Activated CD4-positive, alpha-beta T cell treated with anti-CD3 and anti-CD28 coated beads, Interleukin-2, amount 10 ng/mL, durations not matched to agents 24 days and 14 days (primary cell): ENCODE measurements at regions of chr14 and their contacts with region 1.

Region 1: GRCh38 chr14:75293920-75294642 is 15.5 kb downstream of the FOS start:
- DNase-seq: peak; percentile 98
- H3K4me3 Mint-ChIP-seq: peak overlapping the region; percentile 88
- H3K27ac Mint-ChIP-seq: peak overlapping the region; percentile 95
- H3K4me1 Mint-ChIP-seq: peaks cover 18% of the 10 kb centered on the region
- H3K27me3 Mint-ChIP-seq: peaks cover 20% of the 10 kb centered on the region

Region 2: GRCh38 chr14:75002392-75003249 is 291.5 kb before region 1 on chr14 and contains the start of gene EIF2B2:
- intact Hi-C with region 1: loop called (anchors 1 kb)
- DNase-seq: peak; percentile 100
- H3K4me3 Mint-ChIP-seq: peak within 1 kb of the TSS; percentile 99
- H3K27ac Mint-ChIP-seq: peak within 1 kb of the TSS; percentile 94
- H3K4me1 Mint-ChIP-seq: peaks cover 35% of the 10 kb centered on the region
- H3K27me3 Mint-ChIP-seq: peaks cover 8% of the 10 kb centered on the region
- total RNA-seq, gene EIF2B2: 51.6 and 53.3 TPM in 2 replicates

Region 3: GRCh38 chr14:75132382-75133086 is 161.5 kb before region 1 on chr14:
- intact Hi-C with region 1: loop called (anchors 1 kb)
- DNase-seq: peak; percentile 91
- H3K4me3 Mint-ChIP-seq: no peak overlapping the region
- H3K27ac Mint-ChIP-seq: no peak overlapping the region
- H3K4me1 Mint-ChIP-seq: peaks cover 13% of the 10 kb centered on the region
- H3K27me3 Mint-ChIP-seq: no peaks in the 10 kb centered on the region

Region 4: DNA sequence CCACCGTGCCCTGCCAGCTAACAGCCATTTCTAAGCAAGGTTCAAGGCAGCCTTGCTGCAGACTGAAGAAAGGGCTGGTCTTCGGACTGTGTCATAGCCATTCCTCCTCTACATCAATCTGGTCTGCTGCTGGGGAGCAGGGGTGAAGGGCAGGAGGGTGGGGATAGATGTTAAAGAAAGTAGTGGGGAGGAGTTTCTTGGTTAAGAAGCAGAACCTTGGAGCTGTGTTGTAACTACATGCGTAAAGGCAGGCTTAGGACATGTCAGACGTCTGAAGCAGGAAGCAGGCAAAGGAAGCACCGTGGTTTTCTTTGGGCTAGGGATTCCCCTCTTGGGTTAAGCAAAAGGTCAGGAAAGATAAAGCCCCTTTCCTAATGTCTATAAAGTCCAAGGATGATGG is 149.1 kb before region 1 on chr14:
- intact Hi-C with region 1: no loop called
- DNase-seq: peak; percentile 72
- H3K4me3 Mint-ChIP-seq: peak overlapping the region; percentile 29
- H3K27ac Mint-ChIP-seq: peak overlapping the region; percentile 8
- H3K4me1 Mint-ChIP-seq: peaks cover 38% of the 10 kb centered on the region
- H3K27me3 Mint-ChIP-seq: no peaks in the 10 kb centered on the region

Region 5: DNA sequence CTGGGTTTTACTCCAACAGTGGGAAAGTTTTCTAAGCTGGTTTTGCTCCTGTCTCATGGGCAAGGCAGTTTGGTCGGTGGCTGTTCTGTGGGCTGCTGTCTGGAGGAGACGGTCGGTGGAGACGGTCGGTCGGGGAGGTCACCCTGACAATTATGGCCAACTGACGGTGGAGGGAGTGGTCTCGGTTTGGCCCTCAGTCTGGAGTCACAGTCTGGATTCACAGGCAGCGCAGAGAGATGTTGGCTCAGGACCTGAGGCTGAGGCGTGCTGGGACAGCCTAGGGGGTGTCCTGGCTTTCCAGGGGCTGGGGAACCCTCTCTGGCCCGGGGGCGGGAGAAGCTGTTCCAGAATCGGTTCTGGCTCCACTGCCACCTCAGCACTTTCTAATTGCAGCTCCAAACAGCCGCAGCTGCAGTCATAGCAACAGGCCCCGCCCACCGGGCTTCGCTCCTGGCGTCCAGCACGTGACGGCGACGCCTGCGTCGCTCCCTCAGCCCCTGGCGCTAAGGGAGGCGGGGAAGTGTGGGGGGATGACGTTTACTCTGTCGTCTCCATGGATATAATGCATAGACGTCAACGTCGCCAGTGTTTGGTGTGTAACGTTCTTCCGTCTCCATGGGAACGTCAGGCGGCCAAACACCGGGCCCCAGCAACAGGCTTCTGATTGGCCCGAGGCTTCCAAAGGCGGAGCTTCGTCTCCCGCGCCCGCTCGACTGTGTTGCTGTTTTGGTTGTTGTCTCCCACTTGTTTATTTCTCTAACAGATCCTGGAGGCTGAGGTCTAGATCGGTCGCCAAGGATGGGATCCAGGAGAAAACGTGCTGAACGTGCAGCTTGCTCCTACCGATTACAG is 35.2 kb before region 1 on chr14:
- intact Hi-C with region 1: loop called (anchors 1 kb)
- DNase-seq: peak; percentile 100
- H3K4me3 Mint-ChIP-seq: peak overlapping the region; percentile 85
- H3K27ac Mint-ChIP-seq: peak overlapping the region; percentile 99
- H3K4me1 Mint-ChIP-seq: peaks cover 17% of the 10 kb centered on the region
- H3K27me3 Mint-ChIP-seq: peaks cover 54% of the 10 kb centered on the region

Region 6: DNA sequence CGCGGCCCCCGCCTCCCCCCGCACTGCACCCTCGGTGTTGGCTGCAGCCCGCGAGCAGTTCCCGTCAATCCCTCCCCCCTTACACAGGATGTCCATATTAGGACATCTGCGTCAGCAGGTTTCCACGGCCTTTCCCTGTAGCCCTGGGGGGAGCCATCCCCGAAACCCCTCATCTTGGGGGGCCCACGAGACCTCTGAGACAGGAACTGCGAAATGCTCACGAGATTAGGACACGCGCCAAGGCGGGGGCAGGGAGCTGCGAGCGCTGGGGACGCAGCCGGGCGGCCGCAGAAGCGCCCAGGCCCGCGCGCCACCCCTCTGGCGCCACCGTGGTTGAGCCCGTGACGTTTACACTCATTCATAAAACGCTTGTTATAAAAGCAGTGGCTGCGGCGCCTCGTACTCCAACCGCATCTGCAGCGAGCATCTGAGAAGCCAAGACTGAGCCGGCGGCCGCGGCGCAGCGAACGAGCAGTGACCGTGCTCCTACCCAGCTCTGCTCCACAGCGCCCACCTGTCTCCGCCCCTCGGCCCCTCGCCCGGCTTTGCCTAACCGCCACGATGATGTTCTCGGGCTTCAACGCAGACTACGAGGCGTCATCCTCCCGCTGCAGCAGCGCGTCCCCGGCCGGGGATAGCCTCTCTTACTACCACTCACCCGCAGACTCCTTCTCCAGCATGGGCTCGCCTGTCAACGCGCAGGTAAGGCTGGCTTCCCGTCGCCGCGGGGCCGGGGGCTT is 15.5 kb before region 1 on chr14 and contains the start of gene FOS:
- intact Hi-C with region 1: loop called (anchors 1 kb)
- DNase-seq: peak; percentile 97
- H3K4me3 Mint-ChIP-seq: peak within 1 kb of the TSS; percentile 88
- H3K27ac Mint-ChIP-seq: peak within 1 kb of the TSS; percentile 98
- H3K4me1 Mint-ChIP-seq: peaks cover 40% of the 10 kb centered on the region
- H3K27me3 Mint-ChIP-seq: peaks cover 53% of the 10 kb centered on the region
- total RNA-seq, gene FOS: 26.5 and 29.6 TPM in 2 replicates

Region 7: GRCh38 chr14:75514673-75515628 is 220.9 kb after region 1 on chr14:
- intact Hi-C with region 1: no loop called
- DNase-seq: peak; percentile 83
- H3K4me3 Mint-ChIP-seq: peak overlapping the region; percentile 83
- H3K27ac Mint-ChIP-seq: peak overlapping the region; percentile 92
- H3K4me1 Mint-ChIP-seq: peaks cover 44% of the 10 kb centered on the region
- H3K27me3 Mint-ChIP-seq: no peaks in the 10 kb centered on the region